Natural killer cell (primary cell): ENCODE measurements at regions of chr1 and their contacts with region 1.

Region 1: DNA sequence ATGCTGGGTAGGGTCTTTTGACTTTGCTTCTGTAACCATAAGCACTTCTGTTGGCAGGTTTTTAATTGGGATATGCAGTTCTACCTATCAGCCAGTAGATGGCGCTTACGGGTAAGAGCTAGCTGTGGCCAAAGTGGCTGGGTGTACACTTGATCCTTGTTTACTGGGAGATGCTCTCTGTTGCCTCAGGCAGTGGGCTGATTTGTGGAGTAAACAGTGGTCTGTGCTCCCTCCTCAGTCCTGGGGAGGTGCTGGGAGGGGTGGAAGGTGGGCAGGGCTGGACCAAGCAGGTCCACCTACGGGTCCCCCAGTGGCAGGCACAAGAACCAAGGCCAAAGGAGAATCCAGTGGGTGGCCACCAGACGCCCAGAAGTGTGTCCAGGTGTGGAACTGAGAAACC is 43.4 kb downstream of the RALGPS2 start:
- DNase-seq: peak in 1 of 2 donors; percentile 63
- ATAC-seq: peak in 2 of 3 donors; percentile 75 to 80
- H3K4me3 ChIP-seq: no peak overlapping the region
- H3K4me3 Mint-ChIP-seq: no peak overlapping the region
- H3K27ac ChIP-seq: no peak overlapping the region
- H3K27ac Mint-ChIP-seq: no peak overlapping the region
- H3K4me1 ChIP-seq: no peaks in the 10 kb centered on the region
- H3K4me1 Mint-ChIP-seq: peaks cover 0 to 5% of the 10 kb centered on the region in 2 donors
- H3K27me3 ChIP-seq: no peaks in the 10 kb centered on the region
- H3K27me3 Mint-ChIP-seq: no peaks in the 10 kb centered on the region
- CTCF ChIP-seq: peak; percentile 70

Region 2: DNA sequence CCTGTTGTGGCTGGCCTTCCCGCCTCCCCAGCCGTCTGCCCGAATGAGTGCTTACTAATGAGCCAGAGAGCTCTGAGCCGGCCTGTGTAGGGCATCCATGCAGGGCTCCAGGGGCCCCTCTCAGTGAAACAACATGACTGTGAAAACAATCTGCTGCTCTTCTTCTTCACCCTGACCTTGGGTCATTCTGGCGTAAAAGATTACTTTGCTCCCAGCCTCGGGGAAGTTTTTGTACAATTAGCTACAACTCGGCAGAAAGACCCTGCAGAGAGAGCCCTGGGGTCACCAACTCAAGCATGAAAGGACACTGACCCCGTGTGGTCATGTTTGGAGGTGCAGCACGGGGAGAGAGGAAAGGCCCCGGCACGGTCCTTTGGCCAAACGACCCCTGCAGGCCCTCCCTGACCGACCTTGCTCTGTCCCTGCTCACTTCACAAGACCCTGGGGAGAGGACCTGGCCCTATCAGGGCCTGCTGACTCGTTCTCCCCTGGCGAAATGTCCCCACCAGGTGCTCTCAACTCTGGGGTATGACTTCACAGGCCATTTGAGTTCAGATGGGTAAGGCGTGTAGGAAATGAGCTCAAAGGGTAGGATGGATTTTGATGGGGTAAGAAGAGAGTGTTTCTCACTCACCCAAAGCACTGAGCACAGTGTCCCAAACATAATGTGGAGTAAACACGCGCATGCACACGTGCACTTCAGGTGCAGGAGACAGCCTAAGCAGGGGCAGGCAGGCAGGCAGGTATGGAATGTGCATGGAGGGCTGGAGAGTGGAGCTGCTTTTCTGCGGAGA is 234.3 kb after region 1 on chr1:
- intact Hi-C with region 1: loop called (anchors 5 kb)
- DNase-seq: peak; percentile 65 to 78
- ATAC-seq: peak; percentile 69 to 89 (median 83)
- H3K4me3 ChIP-seq: no peak overlapping the region
- H3K4me3 Mint-ChIP-seq: no peak overlapping the region
- H3K27ac ChIP-seq: no peak overlapping the region
- H3K27ac Mint-ChIP-seq: peak overlapping the region; percentile 83 to 88
- H3K4me1 ChIP-seq: peaks cover 27% of the 10 kb centered on the region
- H3K4me1 Mint-ChIP-seq: peaks cover 18 to 22% of the 10 kb centered on the region in 2 donors
- H3K27me3 ChIP-seq: no peaks in the 10 kb centered on the region
- H3K27me3 Mint-ChIP-seq: no peaks in the 10 kb centered on the region
- CTCF ChIP-seq: peak; percentile 88